H1 (cell line): ENCODE measurements at regions of chr2 and their contacts with region 1.

Region 1: GRCh38 chr2:15939854-15940660 is at the start of gene MYCN:
- DNase-seq: peak; percentile 74 to 89
- H3K4me3 ChIP-seq: peak within 1 kb of the TSS; percentile 86 to 97 (median 94)
- H3K27ac ChIP-seq: peak within 1 kb of the TSS; percentile 80
- H3K4me1 ChIP-seq: peaks cover 6 to 23% (median 14%) of the 10 kb centered on the region in 4 experiments; a peak in 5 of 7 replicates
- H3K27me3 ChIP-seq: no peaks in the 10 kb centered on the region
- CTCF ChIP-seq: peak in 1 of 3 experiments; percentile 82; a peak in 2 of 4 replicates
- EP300 ChIP-seq: no peak
- POLR2A ChIP-seq: peak; percentile 59 to 91
- RAD21 ChIP-seq: peak; percentile 88 to 90
- total RNA-seq, gene MYCN: 137 and 142 TPM in 2 replicates

Region 2: DNA sequence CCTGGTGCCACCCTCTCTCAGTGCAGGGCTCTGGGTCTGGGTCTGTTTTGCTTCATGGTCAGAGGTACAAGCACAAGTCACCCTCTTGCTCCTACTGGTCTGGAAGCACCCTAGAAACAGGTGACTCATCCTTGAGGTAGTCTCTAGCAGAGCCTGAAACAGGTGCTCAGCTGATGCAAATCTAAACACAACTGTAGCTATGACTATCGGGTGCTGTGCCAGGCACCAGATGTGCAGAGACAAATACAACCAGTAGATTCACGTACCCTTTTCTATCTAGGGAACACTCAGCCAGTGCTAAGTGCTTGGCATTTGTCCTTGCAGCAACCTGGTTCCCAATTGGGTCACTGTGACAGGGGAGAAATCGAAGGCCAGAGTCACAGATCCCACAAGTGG is 140.6 kb before region 1 on chr2:
- CTCF ChIA-PET with region 1: interaction called, 12 read pairs
- POLR2A ChIA-PET with region 1: interaction called, 3 read pairs
- DNase-seq: no peak
- H3K4me3 ChIP-seq: no peak overlapping the region
- H3K27ac ChIP-seq: no peak overlapping the region
- H3K4me1 ChIP-seq: peaks cover 0 to 7% (median 2%) of the 10 kb centered on the region in 4 experiments; a peak in 3 of 7 replicates
- H3K27me3 ChIP-seq: no peaks in the 10 kb centered on the region
- CTCF ChIP-seq: no peak
- EP300 ChIP-seq: no peak
- POLR2A ChIP-seq: no peak
- RAD21 ChIP-seq: no peak

Region 3: DNA sequence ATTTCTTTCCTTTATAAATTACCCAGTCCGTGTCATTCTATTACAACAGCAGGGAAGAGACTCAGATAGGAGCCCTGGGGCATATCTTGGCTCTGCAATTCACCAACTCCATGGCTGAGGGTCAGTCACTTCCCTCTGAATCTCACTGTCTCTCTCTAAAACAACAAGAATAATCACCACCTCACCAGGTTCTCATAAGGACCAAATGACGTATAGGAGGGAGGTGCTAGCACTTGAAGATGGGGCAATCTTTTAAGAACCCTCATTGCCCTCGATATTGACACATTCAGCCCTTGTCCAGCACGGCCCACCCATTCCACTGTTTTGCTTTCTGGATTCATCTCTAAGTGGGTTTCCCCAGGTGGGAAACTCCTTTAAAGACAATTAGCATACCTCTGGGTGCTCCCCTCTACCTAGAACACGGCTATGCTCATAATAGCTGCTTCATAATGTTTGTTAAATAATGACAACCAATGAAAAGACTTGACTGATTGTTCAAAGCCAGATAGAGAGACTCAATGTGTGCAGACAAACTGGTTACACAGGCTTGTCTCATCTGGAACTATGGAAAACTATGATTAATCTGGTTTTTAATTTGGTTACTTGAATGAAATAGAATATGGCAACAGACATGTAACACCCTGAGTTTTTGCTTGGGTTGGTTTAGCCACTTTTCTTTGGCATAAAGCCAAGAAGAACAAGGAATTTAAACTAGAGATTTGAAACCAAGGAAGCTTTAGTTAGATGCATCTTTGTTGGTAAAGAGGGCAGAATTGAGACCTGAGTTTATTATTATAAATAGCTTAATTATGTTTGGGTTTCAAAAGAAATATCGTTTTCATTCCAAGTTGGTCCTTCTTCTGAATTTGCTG is 15.5 kb after region 1 on chr2:
- CTCF ChIA-PET with region 1: interaction called, 54 read pairs
- POLR2A ChIA-PET with region 1: interaction called, 25 read pairs
- DNase-seq: no peak
- H3K4me3 ChIP-seq: no peak overlapping the region
- H3K27ac ChIP-seq: no peak overlapping the region
- H3K4me1 ChIP-seq: peaks cover 6 to 18% (median 11%) of the 10 kb centered on the region in 4 experiments
- H3K27me3 ChIP-seq: no peaks in the 10 kb centered on the region
- CTCF ChIP-seq: no peak
- EP300 ChIP-seq: no peak
- POLR2A ChIP-seq: no peak
- RAD21 ChIP-seq: no peak

Region 4: GRCh38 chr2:16034151-16034973 is 94.3 kb after region 1 on chr2:
- CTCF ChIA-PET with region 1: interaction called, 18 read pairs
- POLR2A ChIA-PET with region 1: interaction called, 3 read pairs
- DNase-seq: peak in 1 of 2 experiments; percentile 80
- H3K4me3 ChIP-seq: no peak overlapping the region
- H3K27ac ChIP-seq: no peak overlapping the region
- H3K4me1 ChIP-seq: peaks cover 2 to 10% (median 4%) of the 10 kb centered on the region in 4 experiments
- H3K27me3 ChIP-seq: no peaks in the 10 kb centered on the region
- CTCF ChIP-seq: peak; percentile 64 to 87 (median 87)
- EP300 ChIP-seq: no peak
- POLR2A ChIP-seq: no peak
- RAD21 ChIP-seq: peak; percentile 60 to 76

Region 5: GRCh38 chr2:16081316-16082200 is 141.5 kb after region 1 on chr2:
- CTCF ChIA-PET with region 1: no interaction called
- POLR2A ChIA-PET with region 1: no interaction called
- DNase-seq: no peak
- H3K4me3 ChIP-seq: no peak overlapping the region
- H3K27ac ChIP-seq: no peak overlapping the region
- H3K4me1 ChIP-seq: peaks cover 0 to 6% (median 2%) of the 10 kb centered on the region in 4 experiments; a peak in 4 of 7 replicates
- H3K27me3 ChIP-seq: no peaks in the 10 kb centered on the region
- CTCF ChIP-seq: peak in 1 of 3 experiments; percentile 1; a peak in 1 of 4 replicates
- EP300 ChIP-seq: no peak
- POLR2A ChIP-seq: no peak
- RAD21 ChIP-seq: peak in 1 of 2 experiments; percentile 26; a peak in 1 of 4 replicates

Region 6: DNA sequence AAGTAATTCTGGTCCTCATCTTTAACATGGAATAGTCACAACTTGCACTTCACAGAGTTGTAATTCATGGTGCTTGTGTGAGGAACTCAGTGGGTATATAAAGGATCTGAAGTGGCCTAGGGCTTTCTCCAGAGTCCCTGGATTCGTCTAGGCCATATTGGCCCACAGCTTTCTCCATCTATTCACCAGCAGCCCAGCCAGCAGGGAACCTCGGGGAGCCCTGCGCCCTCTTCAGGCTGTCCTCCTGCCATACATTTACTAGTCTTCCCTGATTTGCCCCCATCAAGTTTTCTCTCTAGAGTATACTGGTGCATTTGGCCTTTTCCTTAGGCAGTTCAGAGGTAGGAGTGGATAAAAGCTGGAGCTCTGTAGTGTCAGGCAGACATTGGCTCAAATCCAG is 278.6 kb after region 1 on chr2:
- CTCF ChIA-PET with region 1: interaction called, 14 read pairs
- POLR2A ChIA-PET with region 1: interaction called, 6 read pairs
- DNase-seq: peak in 1 of 2 experiments; percentile 63
- H3K4me3 ChIP-seq: no peak overlapping the region
- H3K27ac ChIP-seq: no peak overlapping the region
- H3K4me1 ChIP-seq: peaks cover 0 to 15% (median 4%) of the 10 kb centered on the region in 4 experiments; a peak in 5 of 7 replicates
- H3K27me3 ChIP-seq: no peaks in the 10 kb centered on the region
- CTCF ChIP-seq: peak; percentile 59 to 70 (median 61)
- EP300 ChIP-seq: no peak
- POLR2A ChIP-seq: no peak
- RAD21 ChIP-seq: peak; percentile 64 to 70

Region 7: DNA sequence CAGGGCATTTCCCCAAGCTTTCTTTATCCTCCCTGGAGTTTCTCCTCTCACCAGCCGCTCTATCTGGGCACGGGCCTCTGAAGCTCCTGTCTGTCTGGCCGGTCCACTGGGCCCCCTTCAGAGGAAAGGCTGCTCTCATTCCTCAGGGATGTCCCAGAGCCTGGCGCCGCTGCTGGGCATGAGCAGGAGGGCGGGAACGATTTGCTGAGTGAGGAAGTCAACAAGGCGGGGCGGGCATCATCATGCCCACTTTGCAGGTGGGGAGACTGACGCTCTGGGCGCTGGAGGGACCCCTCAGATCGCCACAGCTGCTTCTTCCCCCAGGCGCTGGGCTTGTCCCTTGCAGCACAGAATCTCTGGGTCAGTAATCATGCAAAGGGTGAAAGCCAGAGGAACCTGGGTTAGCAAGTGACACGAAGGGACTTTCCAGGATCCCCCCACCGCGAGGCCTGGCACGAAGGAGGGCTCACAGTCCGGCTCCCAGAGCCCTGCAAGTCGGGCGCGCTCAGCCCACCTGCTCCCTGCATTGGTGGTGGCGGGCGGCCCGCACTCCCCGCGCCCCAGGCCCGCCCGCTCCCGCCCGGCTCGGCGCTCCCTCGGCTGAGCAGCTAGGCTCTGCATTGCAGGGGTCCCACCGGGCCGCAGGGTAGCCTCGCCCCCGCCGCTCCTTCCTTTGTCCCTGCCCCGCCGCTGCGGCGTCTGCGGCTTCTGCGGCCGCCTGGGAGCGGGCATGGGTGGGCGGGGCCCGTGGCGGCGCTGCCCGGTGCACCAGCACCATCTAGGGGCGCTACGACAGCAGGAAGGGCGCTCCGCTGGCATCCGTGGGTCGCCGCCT is 567.8 kb after region 1 on chr2:
- CTCF ChIA-PET with region 1: interaction called, 16 read pairs
- POLR2A ChIA-PET with region 1: no interaction called
- DNase-seq: peak; percentile 27 to 82
- H3K4me3 ChIP-seq: peak overlapping the region; percentile 36 to 61 (median 39)
- H3K27ac ChIP-seq: no peak overlapping the region
- H3K4me1 ChIP-seq: peaks cover 0 to 7% (median 6%) of the 10 kb centered on the region in 4 experiments; a peak in 4 of 7 replicates
- H3K27me3 ChIP-seq: peaks cover 0 to 4% (median 0%) of the 10 kb centered on the region in 4 experiments; a peak in 2 of 7 replicates
- CTCF ChIP-seq: peak; percentile 77 to 82 (median 82)
- EP300 ChIP-seq: peak in 1 of 2 experiments; percentile 48; a peak in 1 of 3 replicates
- POLR2A ChIP-seq: no peak
- RAD21 ChIP-seq: peak; percentile 93 to 95